Psoas muscle (tissue), 8 donors: ENCODE measurements at regions of chr20 and their contacts with region 1.

Region 1: DNA sequence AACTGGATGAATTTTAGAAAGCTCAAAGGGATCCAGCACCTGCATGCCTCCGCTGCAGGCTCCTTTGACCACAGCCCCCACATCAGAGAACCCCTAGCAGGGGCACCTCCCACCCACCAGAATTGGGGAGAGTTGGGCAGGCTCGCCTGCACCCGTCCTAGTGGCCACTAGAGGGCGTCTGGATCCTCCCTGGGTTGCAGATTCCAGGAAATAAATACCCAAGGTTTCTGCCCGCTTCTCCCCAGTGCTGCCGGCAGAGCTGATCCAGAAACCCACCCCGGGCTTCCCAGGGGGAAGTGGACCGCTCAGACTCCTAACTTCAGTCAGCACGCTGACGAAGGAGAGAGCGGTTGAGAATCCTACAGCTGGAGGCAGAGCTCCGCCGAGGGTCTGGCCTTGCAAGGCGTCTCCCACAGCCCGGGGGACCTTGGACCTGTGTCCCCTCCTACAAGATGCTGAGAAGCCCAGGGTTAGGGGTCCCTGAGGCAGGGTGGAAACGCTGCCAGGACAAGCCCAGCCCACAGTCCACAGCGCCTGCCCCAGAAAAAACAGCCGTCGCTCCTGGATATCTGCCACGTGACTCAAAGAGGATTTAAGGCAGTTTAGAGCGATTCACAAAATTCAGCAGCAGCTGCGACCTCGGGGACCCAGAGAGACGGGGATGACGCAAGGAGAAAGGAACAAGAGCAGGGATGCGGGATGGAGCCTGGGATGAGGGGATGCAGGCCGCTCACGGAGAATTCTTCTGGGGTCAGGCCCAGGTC is 32.6 kb upstream of the PHACTR3 start:
- DNase-seq: peak; percentile 46 to 70
- ATAC-seq: peak; percentile 44 to 75 (median 66)
- H3K4me3 ChIP-seq: peak overlapping the region; percentile 53
- H3K27ac ChIP-seq: no peak overlapping the region
- H3K4me1 ChIP-seq: peaks cover 4% of the 10 kb centered on the region
- H3K27me3 ChIP-seq: peaks cover 0 to 36% (median 2%) of the 10 kb centered on the region in 3 donors
- CTCF ChIP-seq: peak; percentile 87

Region 2: GRCh38 chr20:58839474-58839874 is 732.3 kb before region 1 on chr20:
- intact Hi-C with region 1: no loop called
- DNase-seq: peak in 1 of 2 donors; percentile 68
- ATAC-seq: peak; percentile 64 to 92 (median 76)
- H3K4me3 ChIP-seq: peak overlapping the region; percentile 52
- H3K27ac ChIP-seq: no peak overlapping the region
- H3K4me1 ChIP-seq: no peaks in the 10 kb centered on the region
- H3K27me3 ChIP-seq: peaks cover 0 to 34% (median 5%) of the 10 kb centered on the region in 3 donors
- CTCF ChIP-seq: peak; percentile 42

Region 3: DNA sequence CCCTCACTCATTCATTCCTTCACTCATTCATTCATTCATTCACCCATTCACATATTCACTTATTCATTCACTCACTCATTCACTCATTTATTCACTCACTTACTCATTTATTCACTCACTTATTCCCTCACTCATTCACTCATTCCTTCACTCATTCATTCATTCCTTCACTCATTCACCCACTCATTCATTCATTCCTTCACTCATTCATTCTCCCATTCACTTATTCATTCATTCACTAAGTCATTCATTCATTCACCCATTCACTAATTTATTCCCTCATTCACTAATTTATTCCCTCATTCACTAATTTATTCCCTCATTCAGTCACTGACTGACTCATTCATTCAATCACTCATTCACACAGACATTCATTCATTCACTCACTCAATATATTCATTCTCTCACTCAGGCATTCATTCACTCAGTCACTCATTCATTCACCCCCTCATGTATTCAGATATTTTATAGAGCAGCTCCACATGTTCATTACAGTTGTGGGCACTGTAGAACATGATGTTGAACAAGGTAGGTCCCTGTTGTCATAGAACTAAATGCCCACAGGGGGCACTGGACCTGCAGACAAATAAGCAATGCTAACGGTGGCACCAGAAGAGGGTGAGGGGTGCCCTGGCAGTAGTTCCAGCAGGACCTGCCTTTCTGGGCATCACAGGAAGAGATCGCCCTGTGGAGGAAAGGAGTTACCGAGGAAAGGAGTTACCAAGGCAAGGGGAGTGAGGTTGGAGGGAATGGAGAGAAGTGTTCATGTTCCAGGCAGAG is 143.5 kb before region 1 on chr20:
- intact Hi-C with region 1: no loop called
- DNase-seq: no peak
- ATAC-seq: no peak
- H3K4me3 ChIP-seq: no peak overlapping the region
- H3K27ac ChIP-seq: no peak overlapping the region
- H3K4me1 ChIP-seq: no peaks in the 10 kb centered on the region
- H3K27me3 ChIP-seq: peaks cover 0 to 27% (median 2%) of the 10 kb centered on the region in 3 donors
- CTCF ChIP-seq: no peak

Region 4: GRCh38 chr20:59751056-59751688 is 179.4 kb after region 1 on chr20:
- intact Hi-C with region 1: loop called in 1 of 2 experiments (anchors 2 kb)
- DNase-seq: peak; percentile 65 to 72
- ATAC-seq: peak in 3 of 4 donors; percentile 56 to 62 (median 60)
- H3K4me3 ChIP-seq: no peak overlapping the region
- H3K27ac ChIP-seq: no peak overlapping the region
- H3K4me1 ChIP-seq: peaks cover 11% of the 10 kb centered on the region
- H3K27me3 ChIP-seq: peaks cover 0 to 73% (median 0%) of the 10 kb centered on the region in 3 donors
- CTCF ChIP-seq: peak; percentile 58